Pancreas (tissue), 10 donors: ENCODE measurements at regions of chr14 and their contacts with region 1.

Region 1: GRCh38 chr14:23120541-23121251 is 1.6 kb upstream of the CEBPE start:
- DNase-seq: peak; percentile 82 to 96 (median 90)
- ATAC-seq: peak; percentile 89 to 97 (median 92)
- H3K4me3 ChIP-seq: no peak overlapping the region
- H3K27ac ChIP-seq: no peak overlapping the region
- H3K4me1 ChIP-seq: peaks cover 0 to 12% (median 4%) of the 10 kb centered on the region in 3 donors
- H3K27me3 ChIP-seq: no peaks in the 10 kb centered on the region
- CTCF ChIP-seq: peak; percentile 99 to 100 (median 99)

Region 2: DNA sequence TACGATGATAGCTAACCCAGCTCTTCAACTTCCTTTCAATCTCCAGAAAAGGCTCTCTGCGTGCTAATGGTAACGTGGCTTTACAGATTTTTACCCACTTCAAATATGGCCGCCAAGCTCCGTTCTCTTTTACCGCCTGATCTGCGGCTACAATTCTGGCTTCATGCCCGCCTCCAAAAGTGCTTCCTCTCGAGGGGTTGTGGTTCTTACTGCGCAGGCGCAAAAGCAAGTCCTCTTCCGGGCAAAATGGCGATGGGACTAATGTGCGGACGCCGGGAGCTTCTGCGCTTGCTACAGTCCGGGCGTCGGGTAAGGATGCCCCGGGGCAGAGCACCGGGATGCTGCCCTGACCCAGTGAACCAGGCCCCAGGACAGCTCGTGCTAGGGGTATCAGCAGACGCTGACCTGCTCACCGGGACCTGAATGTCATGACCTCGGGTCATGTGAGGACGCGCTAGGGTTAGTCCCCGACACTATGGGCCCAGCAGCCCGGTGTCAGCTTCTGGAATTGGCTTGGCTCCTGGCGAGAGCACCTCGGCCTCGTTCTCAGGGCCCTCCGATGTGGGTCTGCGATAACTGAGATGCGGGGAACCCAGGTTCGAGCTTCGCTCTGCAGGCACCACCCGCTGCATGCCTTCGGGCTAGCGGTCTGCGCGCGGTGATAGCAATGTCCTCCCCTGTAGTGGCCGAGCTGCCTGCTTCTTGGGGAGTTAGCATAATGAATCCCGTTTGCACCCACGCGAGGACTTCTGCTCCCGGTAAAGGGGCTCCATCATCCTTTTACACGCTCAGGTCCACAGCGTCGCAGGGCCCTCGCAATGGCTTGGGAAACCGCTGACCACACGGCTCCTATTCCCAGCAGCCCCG is 354.0 kb before region 1 on chr14 and contains the start of gene OXA1L:
- intact Hi-C with region 1: no loop called
- DNase-seq: peak; percentile 96 to 99 (median 98)
- ATAC-seq: peak; percentile 94 to 98 (median 96)
- H3K4me3 ChIP-seq: peak within 1 kb of the TSS; percentile 60 to 79 (median 68)
- H3K27ac ChIP-seq: peak within 1 kb of the TSS; percentile 53 to 77 (median 60)
- H3K4me1 ChIP-seq: peaks cover 0 to 9% (median 8%) of the 10 kb centered on the region in 3 donors
- H3K27me3 ChIP-seq: no peaks in the 10 kb centered on the region
- CTCF ChIP-seq: no peak
- total RNA-seq, gene OXA1L: 48.1 to 76.2 (median 53.2) TPM

Region 3: DNA sequence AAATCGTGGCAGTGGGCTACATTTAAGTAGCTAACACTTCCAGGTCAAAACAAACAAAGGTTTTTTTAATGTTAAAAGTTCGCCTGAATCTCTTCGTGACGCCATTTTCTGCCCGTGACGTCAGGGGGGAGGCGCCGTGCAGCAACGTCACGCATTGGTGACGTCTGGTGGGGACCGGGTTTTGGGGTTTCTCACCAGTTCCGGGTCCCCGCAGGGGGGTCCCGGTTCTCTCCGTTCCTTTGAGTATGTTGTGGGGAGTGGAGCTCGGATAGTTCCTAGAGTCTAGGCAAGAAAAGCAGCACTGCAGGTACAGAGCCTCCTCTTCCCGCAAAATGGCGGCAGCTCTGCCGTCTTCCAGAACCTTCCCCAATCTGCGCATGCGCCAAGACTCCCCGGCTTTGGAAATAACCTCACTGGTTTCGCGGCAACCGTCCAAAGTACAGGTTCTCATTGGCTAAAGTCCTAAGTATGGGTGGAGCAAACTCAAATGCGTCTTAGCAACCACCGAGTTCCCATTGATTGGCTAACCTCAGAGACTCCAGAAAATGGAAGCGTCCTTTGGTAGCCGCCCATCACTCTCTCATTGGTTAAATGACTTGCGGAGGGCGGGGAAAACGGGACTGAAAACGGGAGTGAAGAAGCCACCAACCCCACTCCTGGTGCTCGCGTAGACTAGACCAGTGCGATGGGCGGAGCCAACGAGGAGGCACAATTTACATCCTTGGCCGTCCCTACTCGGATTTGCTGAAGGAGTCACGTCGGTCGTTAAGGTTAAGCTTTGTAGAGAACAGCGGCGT is 201.7 kb before region 1 on chr14 and contains the start of gene RBM23:
- intact Hi-C with region 1: no loop called
- DNase-seq: peak; percentile 99 to 100 (median 100)
- ATAC-seq: peak; percentile 90 to 97 (median 94)
- H3K4me3 ChIP-seq: peak within 1 kb of the TSS; percentile 49 to 77 (median 74)
- H3K27ac ChIP-seq: peak within 1 kb of the TSS; percentile 98 to 100 (median 99)
- H3K4me1 ChIP-seq: peaks cover 0 to 16% (median 0%) of the 10 kb centered on the region in 3 donors
- H3K27me3 ChIP-seq: no peaks in the 10 kb centered on the region
- CTCF ChIP-seq: no peak
- total RNA-seq, gene RBM23: 20.9 to 39.4 (median 30.6) TPM

Region 4: GRCh38 chr14:23186913-23187654 is 66.4 kb after region 1 on chr14:
- intact Hi-C with region 1: loop called (anchors 2 to 10 kb)
- DNase-seq: peak in 2 of 6 donors; percentile 38 to 68
- ATAC-seq: peak in 3 of 4 donors; percentile 65 to 81 (median 66)
- H3K4me3 ChIP-seq: no peak overlapping the region
- H3K27ac ChIP-seq: no peak overlapping the region
- H3K4me1 ChIP-seq: no peaks in the 10 kb centered on the region
- H3K27me3 ChIP-seq: no peaks in the 10 kb centered on the region
- CTCF ChIP-seq: peak; percentile 39 to 76 (median 56)